Head of caudate nucleus (tissue), 42 donors: ENCODE measurements at regions of chr4 and their contacts with region 1.

Region 1: GRCh38 chr4:110631584-110632505 is 9.0 kb upstream of the PITX2 start:
- DNase-seq: peak; percentile 51 to 90 (median 76)

Region 2: DNA sequence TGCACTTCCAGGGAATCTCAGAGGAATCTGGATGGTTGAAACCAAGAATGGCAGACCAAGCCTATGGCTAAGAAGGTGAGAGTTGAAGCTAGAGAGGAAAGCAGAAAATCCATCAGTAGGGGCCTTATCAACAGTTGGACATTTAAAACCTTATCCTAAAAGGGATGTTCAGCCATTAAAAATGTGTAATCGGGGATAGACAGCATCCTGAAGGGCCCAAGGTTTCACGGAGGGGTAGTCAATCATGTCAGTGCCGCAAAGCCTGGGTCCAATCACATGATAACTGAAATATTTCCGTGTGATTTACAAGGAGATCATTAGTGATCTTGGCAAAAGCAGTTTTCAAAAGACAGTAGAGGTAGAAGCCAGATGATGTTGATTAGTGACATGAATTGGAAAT is 371.5 kb before region 1 on chr4:
- intact Hi-C with region 1: no loop called
- DNase-seq: no peak

Region 3: DNA sequence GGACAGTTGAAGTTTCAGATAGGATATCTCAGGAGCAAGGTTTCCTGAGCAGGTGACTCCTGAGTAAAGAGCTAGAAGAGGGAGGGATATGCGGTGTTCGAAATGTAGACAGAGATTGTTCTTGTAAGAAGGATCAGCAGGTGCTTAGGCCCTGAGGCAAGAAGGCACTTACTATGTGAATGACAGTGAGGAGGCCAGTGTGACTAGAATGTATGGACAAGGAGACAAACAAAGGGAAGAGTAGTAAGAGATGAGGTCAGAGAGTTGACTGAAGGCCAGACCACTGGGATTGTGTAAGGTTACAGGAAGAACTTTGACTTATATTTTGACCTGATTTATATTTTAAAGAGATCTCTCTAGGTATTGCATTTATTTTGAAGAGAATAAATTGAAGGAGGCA is 274.4 kb before region 1 on chr4:
- intact Hi-C with region 1: no loop called
- DNase-seq: no peak

Region 4: GRCh38 chr4:111475001-111475400 is 843.2 kb after region 1 on chr4:
- intact Hi-C with region 1: loop called (anchors 5 kb)
- DNase-seq: peak in 37 of 42 donors; percentile 4 to 78 (median 35)

Region 5: GRCh38 chr4:111641955-111642579 is 1010.2 kb after region 1 on chr4:
- intact Hi-C with region 1: loop called (anchors 5 kb)
- DNase-seq: peak; percentile 31 to 90 (median 73)

Region 6: DNA sequence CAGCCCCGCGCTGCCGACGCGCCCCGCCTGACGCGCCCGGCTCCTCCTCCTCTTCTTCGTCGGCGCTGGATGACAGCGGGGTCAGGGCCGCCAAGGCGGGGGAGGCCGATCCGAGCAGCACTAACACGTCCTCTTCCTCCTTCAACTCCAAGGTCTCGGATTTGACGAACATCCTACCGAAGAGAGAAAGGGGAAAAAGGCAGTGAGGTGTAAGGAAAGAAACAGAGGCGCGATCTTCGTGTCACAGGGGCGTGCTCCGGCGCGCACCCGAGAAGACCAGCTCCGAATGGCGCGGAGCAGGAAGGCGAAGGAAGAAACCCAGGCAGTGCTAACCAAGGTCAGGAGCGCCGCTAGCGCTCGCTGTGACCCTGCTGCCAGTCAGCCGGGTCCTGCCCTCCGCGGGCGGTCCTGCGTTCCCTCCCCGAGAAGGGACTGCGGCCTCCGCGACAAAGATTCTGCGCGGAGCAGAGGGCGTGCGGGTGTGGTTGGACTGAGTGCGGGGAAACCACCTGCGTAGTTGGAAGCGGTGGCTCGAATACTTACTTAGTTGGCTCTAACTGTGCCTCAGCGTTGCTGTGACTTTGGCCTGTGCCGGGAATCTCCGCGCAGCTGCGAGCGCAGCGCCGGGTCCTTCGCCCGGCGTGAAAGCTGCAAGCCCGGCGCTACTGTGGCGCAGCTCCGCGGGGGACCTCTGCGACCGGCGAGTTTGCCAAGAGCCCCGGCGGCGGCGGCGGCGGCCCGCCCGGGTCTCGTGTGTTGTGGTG is 1883.6 kb after region 1 on chr4:
- intact Hi-C with region 1: loop called (anchors 5 kb)
- DNase-seq: peak in 22 of 42 donors; percentile 11 to 54 (median 30)